Activated CD4-positive, alpha-beta T cell treated with anti-CD3 and anti-CD28 coated beads for 36 hours (primary cell): ENCODE measurements at regions of chr21 and their contacts with region 1.

Region 1: DNA sequence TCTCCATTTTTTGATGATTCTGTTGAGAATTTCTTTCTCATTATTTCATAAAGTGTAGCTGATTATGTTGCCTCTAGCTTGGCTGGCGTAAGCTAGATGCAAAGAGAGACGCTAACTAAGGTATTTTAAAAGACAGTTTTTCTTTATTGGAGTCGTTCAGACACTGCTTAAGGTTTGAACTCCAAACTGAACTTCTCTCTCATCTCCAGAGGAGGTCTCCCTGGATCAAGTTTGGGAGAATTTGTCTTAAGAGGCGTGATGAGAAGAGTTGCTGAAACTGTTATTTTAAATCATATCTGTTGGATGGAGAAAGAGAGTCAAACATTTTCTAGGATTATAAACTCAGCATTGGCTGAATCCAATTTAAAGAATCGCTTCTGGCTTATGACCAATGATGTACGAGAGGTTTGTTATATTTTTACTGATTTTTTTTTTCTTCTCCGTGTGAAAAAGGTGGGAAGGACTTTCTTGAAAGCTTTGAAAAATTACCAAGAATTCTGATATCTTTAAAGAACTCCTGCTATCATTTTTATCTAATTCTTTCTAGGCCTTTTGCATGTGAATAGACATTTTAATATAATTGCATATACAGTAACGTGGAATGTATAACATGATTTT is 34.0 kb downstream of the MAP3K7CL start:
- DNase-seq: no peak
- ATAC-seq: peak; percentile 44
- H3K4me3 Mint-ChIP-seq: no peak overlapping the region
- H3K27ac Mint-ChIP-seq: no peak overlapping the region
- H3K4me1 Mint-ChIP-seq: no peaks in the 10 kb centered on the region
- H3K27me3 Mint-ChIP-seq: no peaks in the 10 kb centered on the region

Region 2: DNA sequence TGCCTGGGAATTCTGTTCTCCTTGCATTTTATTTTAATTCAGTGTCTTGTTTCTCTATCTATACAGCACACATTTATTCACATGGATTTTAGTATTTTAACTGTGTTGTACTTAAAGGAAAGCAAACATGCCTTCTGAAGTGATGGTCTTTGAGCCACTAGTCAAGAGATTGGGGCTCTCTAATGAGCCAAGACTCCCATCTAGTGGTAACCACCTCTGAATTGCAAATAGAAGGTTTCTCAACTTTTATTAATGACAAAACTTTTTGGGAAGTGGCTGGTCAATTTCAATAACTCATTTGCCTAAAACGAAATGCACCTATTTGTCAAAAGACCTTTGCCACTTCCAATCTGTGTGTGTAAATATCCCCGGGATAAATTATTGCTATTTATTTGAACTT is 371.4 kb before region 1 on chr21:
- CTCF ChIA-PET with region 1: no interaction called
- POLR2A ChIA-PET with region 1: no interaction called
- intact Hi-C with region 1: no loop called
- DNase-seq: no peak
- ATAC-seq: no peak
- H3K4me3 Mint-ChIP-seq: no peak overlapping the region
- H3K27ac Mint-ChIP-seq: no peak overlapping the region
- H3K4me1 Mint-ChIP-seq: no peaks in the 10 kb centered on the region
- H3K27me3 Mint-ChIP-seq: no peaks in the 10 kb centered on the region

Region 3: DNA sequence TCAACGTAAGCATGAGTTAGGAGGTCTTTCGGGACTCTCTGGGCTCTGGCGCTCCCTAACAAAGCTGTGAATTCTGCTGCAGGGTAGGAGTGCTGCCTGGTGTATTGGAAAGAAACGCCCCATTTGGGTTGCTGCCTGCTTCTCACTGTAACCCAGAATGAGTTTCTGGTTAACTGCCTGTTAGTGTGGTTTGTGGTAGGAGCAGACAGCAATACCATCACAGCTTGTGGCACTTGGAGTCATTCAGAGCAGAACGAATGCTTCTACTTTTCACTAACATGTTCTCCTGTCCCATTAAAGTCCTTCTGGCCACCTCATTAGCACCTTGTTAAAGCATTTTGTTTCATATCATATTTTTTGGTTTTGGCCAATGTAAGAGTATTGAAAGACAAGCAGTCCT is 15.9 kb before region 1 on chr21:
- CTCF ChIA-PET with region 1: interaction called, 12 read pairs
- POLR2A ChIA-PET with region 1: no interaction called
- intact Hi-C with region 1: no loop called
- DNase-seq: peak; percentile 18
- ATAC-seq: peak; percentile 59
- H3K4me3 Mint-ChIP-seq: no peak overlapping the region
- H3K27ac Mint-ChIP-seq: no peak overlapping the region
- H3K4me1 Mint-ChIP-seq: peaks cover 11% of the 10 kb centered on the region
- H3K27me3 Mint-ChIP-seq: no peaks in the 10 kb centered on the region

Region 4: GRCh38 chr21:29342363-29342957 is 178.0 kb after region 1 on chr21:
- CTCF ChIA-PET with region 1: interaction called, 3 read pairs
- POLR2A ChIA-PET with region 1: no interaction called
- intact Hi-C with region 1: loop called (anchors 5 kb)
- DNase-seq: peak; percentile 79
- ATAC-seq: peak; percentile 94
- H3K4me3 Mint-ChIP-seq: peak overlapping the region; percentile 29
- H3K27ac Mint-ChIP-seq: peak overlapping the region; percentile 79
- H3K4me1 Mint-ChIP-seq: peaks cover 42% of the 10 kb centered on the region
- H3K27me3 Mint-ChIP-seq: no peaks in the 10 kb centered on the region